Aorta (tissue), 5 donors: ENCODE measurements at regions of chr1 and their contacts with region 1.

Region 1: DNA sequence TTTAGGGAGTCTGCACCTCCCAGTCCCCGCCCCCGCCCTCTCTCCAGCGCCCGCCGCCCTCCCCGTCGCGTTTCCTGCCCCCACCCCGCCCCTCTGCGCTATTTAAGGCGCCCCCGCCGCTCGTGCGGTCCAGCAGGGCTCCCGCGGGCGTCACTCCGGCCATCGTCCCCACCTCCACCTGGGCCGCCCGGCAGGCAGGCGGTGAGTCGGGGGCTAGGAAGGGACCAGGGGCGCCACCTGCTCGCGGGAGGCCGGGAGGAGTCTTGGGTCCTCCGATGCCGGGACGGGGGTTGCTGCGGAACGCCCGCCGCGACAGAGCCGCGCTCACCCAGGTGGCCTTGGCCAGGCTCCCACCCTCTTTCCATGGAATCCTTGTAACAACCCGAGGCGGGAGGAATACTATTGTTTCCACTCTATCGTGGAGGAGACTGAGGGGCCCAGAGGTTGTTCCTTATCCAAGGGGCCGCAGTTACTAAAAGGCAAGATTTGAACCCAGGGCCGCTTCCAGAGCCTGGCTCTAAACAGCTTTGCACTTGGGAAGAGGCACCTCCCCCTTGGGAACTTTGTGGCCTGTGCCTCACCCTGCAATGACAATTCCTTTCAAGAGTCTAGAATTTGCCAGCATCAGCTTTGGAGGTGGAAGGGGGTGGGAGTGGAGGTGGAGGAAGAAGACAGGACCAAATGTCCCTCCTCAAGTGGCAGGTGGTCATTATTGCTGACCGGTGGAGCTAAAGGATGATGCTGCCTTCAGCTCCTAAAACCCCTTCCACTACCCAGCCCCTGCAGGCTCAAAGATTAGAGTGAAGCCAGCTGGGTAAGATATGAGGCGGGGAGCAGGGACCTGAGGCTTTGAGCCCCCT is at the start of gene GJA4:
- DNase-seq: peak in 1 of 2 donors; percentile 85
- ATAC-seq: peak; percentile 30
- H3K4me3 ChIP-seq: peak within 1 kb of the TSS; percentile 52 to 66
- H3K27ac ChIP-seq: peak within 1 kb of the TSS; percentile 75 to 80
- H3K4me1 ChIP-seq: peaks cover 0 to 3% of the 10 kb centered on the region in 2 donors
- H3K27me3 ChIP-seq: no peaks in the 10 kb centered on the region
- total RNA-seq, gene GJA4: 45.4 to 49.2 TPM

Region 2: DNA sequence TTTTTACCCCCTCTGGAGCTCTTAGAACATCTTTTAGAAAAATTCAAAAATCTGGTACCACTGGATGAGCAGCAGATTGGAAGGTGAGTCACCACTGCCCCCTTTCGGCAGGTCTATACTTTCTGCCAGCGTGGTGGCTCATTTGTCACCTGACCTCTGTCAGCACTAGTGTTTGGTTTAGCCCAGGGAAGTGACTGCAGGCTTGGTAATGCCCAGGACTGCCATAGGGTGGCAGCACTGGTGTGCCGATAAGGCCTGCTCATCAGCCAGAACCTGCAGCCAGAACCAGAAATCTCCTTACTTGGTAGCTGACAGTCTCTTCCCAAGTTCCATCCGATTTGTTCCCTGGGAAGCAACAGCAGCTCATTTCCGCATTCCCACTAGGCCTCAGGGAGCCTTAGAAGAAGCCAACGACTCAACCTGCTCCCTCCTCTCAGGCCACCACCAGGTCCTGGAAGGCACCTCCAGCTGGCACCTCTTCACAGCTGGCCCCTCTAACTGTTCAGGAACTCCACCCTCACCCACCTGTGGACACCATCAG is 59.6 kb after region 1 on chr1:
- intact Hi-C with region 1: loop called in 1 of 2 experiments (anchors 2 kb)
- DNase-seq: peak; percentile 94 to 95
- ATAC-seq: peak; percentile 97
- H3K4me3 ChIP-seq: no peak overlapping the region
- H3K27ac ChIP-seq: peak overlapping the region; percentile 14 to 92
- H3K4me1 ChIP-seq: peaks cover 2 to 7% of the 10 kb centered on the region in 2 donors
- H3K27me3 ChIP-seq: no peaks in the 10 kb centered on the region